ENCODE measurements at regions of chr5 and their contacts with region 1.

Region 1: DNA sequence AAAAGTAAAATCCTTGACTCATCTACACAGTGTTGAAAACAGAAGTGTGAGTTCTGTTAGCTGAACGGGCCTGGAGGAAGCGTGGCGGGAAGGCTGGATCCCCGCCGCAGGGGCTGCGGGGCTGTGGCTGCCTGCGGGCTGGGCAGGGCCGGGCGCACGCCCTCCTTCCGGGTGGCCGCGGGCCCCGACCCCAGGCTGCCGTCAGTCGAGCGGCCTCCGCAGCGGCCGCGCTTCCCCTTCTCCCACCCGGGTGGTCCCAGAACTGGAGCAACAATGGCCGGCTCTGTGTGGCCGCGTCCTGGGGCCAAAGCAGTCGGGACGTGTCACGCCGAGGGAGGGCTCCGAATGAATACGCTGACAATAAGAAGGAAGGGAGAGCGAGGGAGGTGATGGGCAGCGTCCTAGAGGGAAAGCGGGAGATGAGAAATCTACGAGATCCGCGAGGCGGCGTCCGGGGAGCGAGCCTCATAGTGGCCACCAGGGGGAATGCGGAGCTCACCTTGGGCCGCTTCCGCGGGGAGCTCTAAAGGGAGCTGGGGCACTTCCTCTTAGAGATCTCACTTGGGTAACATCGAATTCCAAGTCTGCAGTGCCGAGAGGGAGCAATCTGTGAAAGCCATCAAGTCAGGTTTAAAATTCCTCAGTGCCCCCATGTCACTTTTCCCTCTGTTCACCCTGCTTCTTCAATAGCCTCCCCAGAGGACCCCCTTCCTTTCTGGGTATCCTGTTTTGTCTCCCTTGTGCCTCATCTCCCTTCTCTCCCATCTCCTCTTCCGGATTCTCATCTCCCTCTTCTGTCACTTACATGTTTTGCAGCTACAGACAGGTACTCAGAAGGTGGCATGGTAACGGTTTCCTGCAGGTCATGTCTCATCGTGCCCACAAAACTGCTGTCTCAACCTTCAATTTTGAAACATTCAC is 83.9 kb downstream of the SLC1A3 start:
- DNase-seq: peak; percentile 87
- CTCF ChIP-seq: peak; percentile 88

Region 2: DNA sequence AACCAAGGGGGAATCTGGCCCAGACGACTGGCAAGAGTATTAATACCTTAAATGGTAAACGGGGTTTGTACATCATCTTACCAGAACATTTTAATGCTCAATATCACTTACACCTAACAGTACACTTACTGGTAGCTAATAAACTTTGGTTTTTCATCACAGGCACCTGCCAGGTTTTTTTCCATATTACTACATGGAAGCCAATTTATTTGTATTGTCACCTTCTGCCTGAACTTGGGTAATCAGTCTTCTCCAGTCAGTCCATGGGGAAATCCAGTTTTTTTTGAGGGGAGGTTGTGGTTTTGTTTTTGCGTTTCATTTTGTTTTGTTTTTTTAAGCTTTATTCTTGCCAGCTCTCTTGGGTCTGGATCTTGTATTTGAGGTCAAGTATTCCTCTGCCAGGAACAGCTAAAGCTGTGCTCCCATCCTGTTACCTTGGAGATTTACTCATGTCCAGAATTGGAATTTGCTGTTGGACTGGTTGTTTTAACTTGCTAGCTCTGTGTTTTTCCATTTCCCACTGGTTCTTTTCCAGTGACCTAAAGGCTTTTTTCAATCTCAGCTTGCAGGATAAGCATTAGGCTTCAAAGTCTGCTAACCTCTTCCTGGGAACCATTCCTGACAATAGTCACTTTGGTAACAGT is 437.5 kb before region 1 on chr5:
- in situ Hi-C with region 1: loop called (anchors 25 kb)
- DNase-seq: no peak
- CTCF ChIP-seq: no peak

Region 3: DNA sequence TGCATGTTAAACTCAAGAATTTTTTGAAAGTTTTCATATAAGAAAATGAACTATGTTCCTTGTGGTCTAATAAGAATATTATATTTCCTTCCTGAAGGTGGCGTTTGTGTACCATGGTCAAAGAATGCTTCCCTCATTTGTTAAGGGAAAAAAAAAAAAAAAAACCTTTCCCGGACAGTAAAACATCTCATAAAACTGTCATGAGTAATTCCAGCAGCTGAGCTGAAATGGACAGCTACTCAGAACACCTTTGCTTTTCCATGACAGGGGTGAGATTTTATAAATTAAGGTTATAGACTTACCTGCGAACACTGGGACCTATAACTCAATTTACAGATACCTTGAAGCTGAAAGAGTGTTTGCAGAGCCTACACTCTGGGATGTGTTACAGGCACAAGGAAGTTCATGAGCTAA is 275.4 kb before region 1 on chr5:
- in situ Hi-C with region 1: loop called (anchors 25 kb)
- DNase-seq: no peak
- CTCF ChIP-seq: peak; percentile 46

Measured in GM13977 (cell line).